HAP-1 (cell line): ENCODE measurements at regions of chr6 and their contacts with region 1.

Region 1: GRCh38 chr6:97394160-97394748 is 111.2 kb upstream of the MMS22L start:
- DNase-seq: peak; percentile 66 to 70
- H3K4me3 ChIP-seq: no peak overlapping the region
- H3K4me1 ChIP-seq: peaks cover 3% of the 10 kb centered on the region; the same call in 1 of the 2 replicates
- H3K27me3 ChIP-seq: no peaks in the 10 kb centered on the region

Region 2: DNA sequence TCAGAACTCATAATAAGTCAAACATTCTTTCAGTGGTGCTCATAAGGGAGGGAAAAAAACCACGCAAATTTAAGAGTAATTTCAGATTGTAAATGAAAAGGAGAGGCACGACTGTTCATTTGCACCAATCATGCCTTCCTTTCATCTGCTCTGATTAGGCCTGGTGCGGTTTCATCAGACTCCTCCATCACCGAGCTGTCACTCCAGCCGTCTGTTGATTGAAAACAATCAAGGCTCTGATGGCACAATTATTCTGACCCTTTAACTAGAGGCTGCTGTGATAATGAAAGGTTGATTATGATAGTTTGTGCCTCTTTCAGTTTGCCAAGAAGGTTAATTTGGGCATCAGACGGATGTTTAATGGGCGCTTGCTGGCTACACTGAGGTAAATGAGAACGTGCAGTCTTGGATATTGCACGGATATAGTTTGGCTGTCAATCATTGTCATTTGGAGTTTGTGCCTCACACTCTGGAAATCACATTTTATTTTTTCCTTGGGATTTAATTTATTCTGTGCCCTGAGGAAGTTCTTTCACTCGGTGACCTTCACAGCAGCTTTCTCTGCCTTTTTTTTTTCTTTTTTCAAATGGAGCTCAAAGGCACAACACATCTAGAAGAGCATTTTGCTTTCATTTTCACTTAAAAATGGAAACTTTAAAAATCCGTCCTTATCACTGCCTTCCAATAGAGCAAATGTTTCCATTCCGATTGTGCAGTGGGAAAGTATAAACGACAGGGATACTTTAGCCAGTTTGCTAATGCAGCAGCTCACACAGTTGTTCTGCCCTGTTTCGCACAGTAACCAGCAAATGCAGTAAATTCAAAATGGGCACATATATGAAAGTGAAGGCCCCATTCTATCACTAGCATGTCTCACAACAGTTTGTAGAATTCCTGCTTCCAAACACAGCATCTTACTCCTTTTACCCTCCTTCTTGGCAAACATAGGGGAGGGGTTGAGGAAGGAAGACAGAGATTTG is 296.9 kb before region 1 on chr6:
- in situ Hi-C with region 1: no loop called
- DNase-seq: no peak
- H3K4me3 ChIP-seq: no peak overlapping the region
- H3K4me1 ChIP-seq: no peaks in the 10 kb centered on the region
- H3K27me3 ChIP-seq: no peaks in the 10 kb centered on the region

Region 3: GRCh38 chr6:97186416-97186999 is 207.7 kb before region 1 on chr6:
- in situ Hi-C with region 1: loop called (anchors 10 kb)
- DNase-seq: peak; percentile 71 to 84
- H3K4me3 ChIP-seq: no peak overlapping the region
- H3K4me1 ChIP-seq: no peaks in the 10 kb centered on the region
- H3K27me3 ChIP-seq: no peaks in the 10 kb centered on the region

Region 4: GRCh38 chr6:97465877-97466561 is 71.8 kb after region 1 on chr6:
- in situ Hi-C with region 1: no loop called
- DNase-seq: peak; percentile 10 to 12
- H3K4me3 ChIP-seq: no peak overlapping the region
- H3K4me1 ChIP-seq: no peaks in the 10 kb centered on the region; the same call in 1 of the 2 replicates
- H3K27me3 ChIP-seq: peaks cover 2% of the 10 kb centered on the region; the same call in 1 of the 2 replicates